Calu3 (cell line): ENCODE measurements at regions of chr3 and their contacts with region 1.

Region 1: DNA sequence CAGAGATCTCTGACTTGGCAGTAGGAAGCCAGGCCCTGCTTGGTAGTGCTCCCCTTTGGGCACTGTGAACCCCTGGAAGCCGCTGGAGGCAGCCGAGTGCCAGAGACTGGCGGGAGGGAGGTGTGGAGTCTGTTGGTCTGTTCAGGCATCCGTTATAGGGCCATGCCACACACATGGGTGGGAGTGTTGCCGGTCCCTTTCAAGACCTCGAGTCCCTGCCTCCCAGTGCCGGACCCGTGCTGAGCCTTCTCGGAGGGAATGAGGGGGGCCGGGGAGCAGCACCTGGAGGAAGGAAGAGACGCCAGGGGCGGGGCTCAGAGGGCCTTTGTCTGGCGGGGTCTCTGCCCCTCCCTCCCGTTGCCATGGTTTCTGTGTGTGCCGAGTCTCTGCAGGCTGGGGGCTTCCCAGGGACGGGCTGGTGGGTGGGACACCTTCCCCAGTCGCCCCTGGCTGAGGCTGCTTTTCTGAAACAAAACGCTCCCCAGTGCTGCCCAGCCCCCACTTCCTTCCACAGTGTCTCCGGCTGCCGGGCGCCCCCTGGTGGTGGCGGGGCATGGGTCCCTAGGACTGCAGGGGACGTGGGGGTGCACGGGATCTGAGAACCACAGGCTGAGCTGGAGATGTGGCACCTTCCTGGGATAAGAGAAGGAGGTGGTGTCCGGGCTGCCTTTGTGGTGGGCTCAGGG is 10.0 kb downstream of the GNAI2 start:
- DNase-seq: peak; percentile 95
- H3K4me3 Mint-ChIP-seq: peak overlapping the region; percentile 80
- H3K27ac Mint-ChIP-seq: peak overlapping the region; percentile 52
- H3K4me1 Mint-ChIP-seq: peaks cover 23% of the 10 kb centered on the region
- H3K27me3 Mint-ChIP-seq: no peaks in the 10 kb centered on the region
- CTCF ChIP-seq: peak; percentile 93

Region 2: GRCh38 chr3:50227390-50228183 is 18.4 kb before region 1 on chr3:
- CTCF ChIA-PET with region 1: interaction called, 13 read pairs
- intact Hi-C with region 1: no loop called
- DNase-seq: peak; percentile 97
- H3K4me3 Mint-ChIP-seq: peak overlapping the region; percentile 75
- H3K27ac Mint-ChIP-seq: peak overlapping the region; percentile 60
- H3K4me1 Mint-ChIP-seq: peaks cover 27% of the 10 kb centered on the region
- H3K27me3 Mint-ChIP-seq: peaks cover 26% of the 10 kb centered on the region
- CTCF ChIP-seq: peak; percentile 73

Region 3: GRCh38 chr3:50235716-50236496 is 10.1 kb before region 1 on chr3 and contains the start of gene GNAI2:
- CTCF ChIA-PET with region 1: interaction called, 13 read pairs
- intact Hi-C with region 1: no loop called
- DNase-seq: peak; percentile 98
- H3K4me3 Mint-ChIP-seq: peak within 1 kb of the TSS; percentile 86
- H3K27ac Mint-ChIP-seq: peak within 1 kb of the TSS; percentile 90
- H3K4me1 Mint-ChIP-seq: peaks cover 20% of the 10 kb centered on the region
- H3K27me3 Mint-ChIP-seq: no peaks in the 10 kb centered on the region
- CTCF ChIP-seq: no peak
- total RNA-seq, gene GNAI2: 92.5 and 102 TPM in 2 replicates

Region 4: DNA sequence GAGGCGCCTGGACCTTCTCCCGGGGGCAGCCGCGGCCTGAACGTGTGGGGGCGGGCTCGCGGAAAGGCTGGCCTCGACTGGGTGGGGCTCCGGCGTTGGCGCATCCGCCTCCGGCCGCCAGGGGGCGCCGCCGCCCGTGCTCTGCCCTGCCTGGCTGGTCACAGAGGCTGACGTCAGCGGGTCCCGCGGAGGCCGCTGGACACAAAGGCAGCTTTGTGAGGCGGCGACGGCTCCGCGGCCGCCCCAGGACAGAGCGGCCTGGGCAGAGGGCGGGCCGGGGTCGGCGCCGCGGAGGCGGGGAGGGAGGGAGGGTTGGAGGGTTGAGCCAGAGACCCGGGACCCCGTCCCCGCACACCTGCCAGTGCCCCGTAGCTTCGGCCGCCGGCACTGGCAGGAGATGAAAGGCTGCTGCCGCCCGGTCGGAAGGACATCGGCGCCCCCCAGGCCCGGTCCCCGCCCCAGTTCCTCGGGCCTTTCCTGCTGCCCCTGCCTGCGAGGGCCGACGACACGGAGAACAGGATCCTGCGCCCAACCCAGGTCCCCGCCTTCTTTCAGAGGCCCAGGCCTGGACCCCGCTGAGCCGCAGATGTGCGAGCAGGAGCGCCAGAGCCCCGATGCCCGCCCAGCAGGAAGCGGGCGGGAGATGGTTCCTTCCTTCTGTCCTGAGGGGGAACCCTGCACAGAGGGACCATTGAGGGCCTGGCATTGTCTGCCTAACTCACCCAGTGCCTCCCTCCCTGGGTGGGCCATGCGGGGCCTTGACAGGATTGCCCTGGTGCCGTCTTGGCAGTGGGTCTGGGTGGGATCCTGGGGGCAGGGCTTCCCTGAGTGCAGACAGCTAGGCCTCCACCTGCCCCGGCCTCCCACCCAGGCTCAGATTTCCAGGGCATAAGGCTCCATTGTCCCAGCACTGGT is 14.3 kb after region 1 on chr3:
- CTCF ChIA-PET with region 1: interaction called, 14 read pairs
- intact Hi-C with region 1: no loop called
- DNase-seq: peak; percentile 96
- H3K4me3 Mint-ChIP-seq: peak overlapping the region; percentile 54
- H3K27ac Mint-ChIP-seq: peak overlapping the region; percentile 77
- H3K4me1 Mint-ChIP-seq: peaks cover 17% of the 10 kb centered on the region
- H3K27me3 Mint-ChIP-seq: no peaks in the 10 kb centered on the region
- CTCF ChIP-seq: peak; percentile 94

Region 5: DNA sequence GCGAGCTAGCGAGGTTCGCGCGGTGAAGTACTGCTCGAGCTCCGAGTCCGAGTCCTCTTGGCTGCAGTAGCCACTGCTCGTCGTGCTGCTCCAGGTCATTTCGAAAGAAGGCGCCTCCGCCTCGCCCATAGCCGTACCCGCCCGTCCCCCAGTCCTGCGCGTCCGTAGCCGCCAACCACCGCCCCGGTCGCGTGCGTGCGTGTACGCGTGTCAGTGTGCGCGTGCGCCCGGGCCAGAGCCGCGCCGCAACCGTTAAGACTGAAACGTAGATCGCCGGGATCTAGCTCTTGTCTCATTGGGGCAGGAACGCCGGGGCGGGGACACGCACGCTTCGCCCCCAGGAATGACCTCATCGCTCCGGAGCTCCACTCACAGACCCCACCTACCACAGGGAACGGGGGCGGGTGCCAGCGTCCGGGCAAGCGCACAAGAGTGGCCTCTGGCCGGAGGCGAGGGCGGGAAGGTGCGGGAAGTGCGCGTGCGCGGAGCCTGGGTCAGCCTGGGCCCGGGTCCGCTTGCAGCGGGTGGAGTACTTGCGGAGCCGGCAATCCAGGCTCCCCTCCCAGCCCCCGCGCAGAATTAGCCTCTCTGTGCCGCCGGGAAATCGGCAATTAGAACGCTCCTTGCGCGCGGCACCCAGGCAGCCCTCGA is 91.3 kb after region 1 on chr3:
- CTCF ChIA-PET with region 1: no interaction called
- intact Hi-C with region 1: no loop called
- DNase-seq: peak; percentile 98
- H3K4me3 Mint-ChIP-seq: peak overlapping the region; percentile 93
- H3K27ac Mint-ChIP-seq: peak overlapping the region; percentile 82
- H3K4me1 Mint-ChIP-seq: peaks cover 11% of the 10 kb centered on the region
- H3K27me3 Mint-ChIP-seq: peaks cover 18% of the 10 kb centered on the region
- CTCF ChIP-seq: no peak

Region 6: GRCh38 chr3:50415066-50415465 is 169.1 kb after region 1 on chr3:
- CTCF ChIA-PET with region 1: no interaction called
- intact Hi-C with region 1: no loop called
- DNase-seq: no peak
- H3K4me3 Mint-ChIP-seq: no peak overlapping the region
- H3K27ac Mint-ChIP-seq: no peak overlapping the region
- H3K4me1 Mint-ChIP-seq: no peaks in the 10 kb centered on the region
- H3K27me3 Mint-ChIP-seq: peaks cover 74% of the 10 kb centered on the region
- CTCF ChIP-seq: no peak